Activated naive CD4-positive, alpha-beta T cell treated with anti-CD3 and anti-CD28 coated beads for 36 hours (primary cell): ENCODE measurements at regions of chr9 and their contacts with region 1.

Region 1: DNA sequence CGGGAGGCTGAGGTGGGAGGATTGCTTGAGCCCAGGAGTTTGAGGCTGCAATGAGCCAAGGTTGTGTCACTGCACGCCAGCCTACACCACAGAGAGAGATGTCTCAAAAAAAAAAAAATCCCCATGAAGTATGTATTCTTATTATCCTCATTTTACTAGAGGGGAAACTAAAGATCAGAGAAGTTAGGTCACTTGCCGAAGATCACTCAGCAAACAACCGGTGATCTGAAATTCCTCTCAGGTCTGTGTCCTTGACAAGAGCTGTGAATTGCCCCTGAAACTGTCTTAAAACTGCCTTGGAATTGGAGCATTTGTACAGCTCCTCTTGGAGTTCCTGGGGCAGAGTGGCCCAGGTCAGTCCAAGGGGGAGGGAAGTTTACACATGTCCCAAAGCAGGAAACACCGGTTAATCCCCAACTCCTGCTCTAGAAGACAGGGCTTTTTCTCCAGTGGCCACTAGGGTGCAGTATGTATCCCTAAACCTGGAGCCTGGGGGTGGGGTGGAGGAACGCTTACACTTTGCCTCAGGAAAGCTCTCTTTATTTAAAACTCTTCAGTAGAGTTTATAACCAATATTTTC is 27.6 kb downstream of the AQP7 start:
- DNase-seq: peak; percentile 88
- H3K4me3 Mint-ChIP-seq: no peak overlapping the region
- H3K27ac Mint-ChIP-seq: no peak overlapping the region
- H3K4me1 Mint-ChIP-seq: peaks cover 7% of the 10 kb centered on the region
- H3K27me3 Mint-ChIP-seq: no peaks in the 10 kb centered on the region

Region 2: GRCh38 chr9:33249087-33249657 is 125.6 kb before region 1 on chr9:
- CTCF ChIA-PET with region 1: no interaction called
- intact Hi-C with region 1: no loop called
- DNase-seq: no peak
- H3K4me3 Mint-ChIP-seq: no peak overlapping the region
- H3K27ac Mint-ChIP-seq: no peak overlapping the region
- H3K4me1 Mint-ChIP-seq: no peaks in the 10 kb centered on the region
- H3K27me3 Mint-ChIP-seq: no peaks in the 10 kb centered on the region

Region 3: DNA sequence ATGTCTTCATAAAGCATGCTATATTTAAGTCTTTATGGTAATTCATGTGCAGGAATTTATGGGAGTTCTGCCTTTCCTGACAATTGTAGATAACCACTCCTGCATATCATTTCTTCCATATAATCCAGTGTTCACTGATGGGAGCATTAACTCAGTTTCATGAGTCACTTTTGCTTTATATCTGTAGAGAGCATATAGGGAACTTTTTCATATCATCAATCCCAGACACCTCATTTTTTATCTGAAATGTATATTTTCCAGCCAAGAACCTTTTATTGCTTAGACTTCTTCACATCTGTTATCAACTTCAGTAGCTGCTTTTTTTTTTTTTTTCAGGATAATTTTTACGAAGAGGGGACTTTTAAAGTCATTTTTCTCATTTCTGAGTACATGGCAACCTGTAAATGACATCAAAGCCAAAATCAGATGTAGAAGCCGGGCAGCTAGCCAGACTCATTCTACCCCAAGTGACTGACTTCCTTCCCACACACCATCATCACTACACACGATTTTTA is 43.3 kb before region 1 on chr9:
- CTCF ChIA-PET with region 1: interaction called, 10 read pairs
- intact Hi-C with region 1: no loop called
- DNase-seq: no peak
- H3K4me3 Mint-ChIP-seq: no peak overlapping the region
- H3K27ac Mint-ChIP-seq: no peak overlapping the region
- H3K4me1 Mint-ChIP-seq: no peaks in the 10 kb centered on the region
- H3K27me3 Mint-ChIP-seq: no peaks in the 10 kb centered on the region

Region 4: DNA sequence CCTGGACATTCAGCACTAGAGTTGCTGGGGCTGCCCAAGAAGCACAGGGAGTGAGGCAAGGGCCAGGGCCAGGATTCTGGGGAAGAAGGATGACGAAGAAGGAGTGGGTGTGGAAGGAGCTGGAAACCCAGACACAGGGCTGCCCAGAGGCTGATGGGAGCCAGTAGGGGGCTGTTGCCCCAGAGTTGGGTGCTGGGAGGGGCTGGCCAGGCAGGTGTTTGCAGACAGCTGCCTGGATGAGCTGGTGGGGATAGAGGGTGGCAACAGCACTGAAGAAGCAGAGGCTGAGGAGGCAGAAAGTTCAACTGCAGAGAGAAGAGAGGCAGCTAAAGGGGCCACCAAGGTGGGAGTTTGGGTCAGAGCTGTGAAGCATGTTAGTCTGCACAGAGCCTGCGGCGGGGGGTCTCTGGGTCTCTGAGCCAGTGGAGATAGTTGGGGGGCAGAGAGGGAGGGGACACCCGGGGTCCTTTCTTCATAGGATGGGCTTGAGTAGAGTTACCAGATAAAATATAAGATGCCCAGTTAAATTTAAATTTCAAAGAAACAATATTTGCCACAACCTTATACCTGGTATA is 30.2 kb after region 1 on chr9:
- CTCF ChIA-PET with region 1: interaction called, 84 read pairs
- intact Hi-C with region 1: no loop called
- DNase-seq: no peak
- H3K4me3 Mint-ChIP-seq: no peak overlapping the region
- H3K27ac Mint-ChIP-seq: no peak overlapping the region
- H3K4me1 Mint-ChIP-seq: no peaks in the 10 kb centered on the region
- H3K27me3 Mint-ChIP-seq: no peaks in the 10 kb centered on the region

Region 5: DNA sequence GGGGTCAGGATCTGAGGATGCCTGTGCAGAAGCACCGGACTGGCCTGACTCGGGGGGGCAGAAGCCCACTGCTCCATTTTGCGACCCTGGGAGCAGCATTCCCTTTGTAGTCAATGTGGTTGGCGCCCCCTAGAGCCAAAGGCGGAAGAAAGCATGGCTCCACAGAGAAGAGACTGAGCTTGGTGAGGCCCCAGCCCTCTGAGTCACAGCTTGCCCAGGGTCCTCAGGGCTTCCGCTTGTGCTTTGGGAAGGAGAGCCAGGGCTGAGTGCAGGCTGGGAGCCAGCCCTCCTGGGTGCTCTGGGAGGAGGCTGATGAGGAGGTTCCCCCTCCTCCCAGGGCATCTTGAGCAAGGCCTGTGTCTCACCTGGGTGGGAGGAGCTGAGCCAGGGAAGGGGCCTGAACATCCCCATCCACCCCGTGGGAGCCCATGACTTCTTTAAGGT is 78.1 kb after region 1 on chr9:
- CTCF ChIA-PET with region 1: interaction called, 25 read pairs
- intact Hi-C with region 1: loop called (anchors 1 kb)
- DNase-seq: peak; percentile 82
- H3K4me3 Mint-ChIP-seq: no peak overlapping the region
- H3K27ac Mint-ChIP-seq: peak overlapping the region; percentile 83
- H3K4me1 Mint-ChIP-seq: peaks cover 72% of the 10 kb centered on the region
- H3K27me3 Mint-ChIP-seq: no peaks in the 10 kb centered on the region

Region 6: GRCh38 chr9:33473643-33474352 is 99.1 kb after region 1 on chr9 and contains the start of gene NOL6:
- CTCF ChIA-PET with region 1: interaction called, 23 read pairs
- intact Hi-C with region 1: no loop called
- DNase-seq: peak; percentile 99
- H3K4me3 Mint-ChIP-seq: peak within 1 kb of the TSS; percentile 95
- H3K27ac Mint-ChIP-seq: peak within 1 kb of the TSS; percentile 93
- H3K4me1 Mint-ChIP-seq: peaks cover 29% of the 10 kb centered on the region
- H3K27me3 Mint-ChIP-seq: no peaks in the 10 kb centered on the region
- total RNA-seq, gene NOL6: 38.2 to 38.6 TPM

Region 7: GRCh38 chr9:33517373-33517772 is 142.6 kb after region 1 on chr9:
- CTCF ChIA-PET with region 1: interaction called, 3 read pairs
- intact Hi-C with region 1: loop called (anchors 5 kb)
- DNase-seq: peak; percentile 19
- H3K4me3 Mint-ChIP-seq: no peak overlapping the region
- H3K27ac Mint-ChIP-seq: no peak overlapping the region
- H3K4me1 Mint-ChIP-seq: no peaks in the 10 kb centered on the region
- H3K27me3 Mint-ChIP-seq: peaks cover 12% of the 10 kb centered on the region